Activated CD4-positive, alpha-beta T cell treated with anti-CD3 and anti-CD28 coated beads, Interleukin-2, amount 10 ng/mL, durations not matched to agents 24 days and 14 days (primary cell): ENCODE measurements at regions of chr15 and their contacts with region 1.

Region 1: DNA sequence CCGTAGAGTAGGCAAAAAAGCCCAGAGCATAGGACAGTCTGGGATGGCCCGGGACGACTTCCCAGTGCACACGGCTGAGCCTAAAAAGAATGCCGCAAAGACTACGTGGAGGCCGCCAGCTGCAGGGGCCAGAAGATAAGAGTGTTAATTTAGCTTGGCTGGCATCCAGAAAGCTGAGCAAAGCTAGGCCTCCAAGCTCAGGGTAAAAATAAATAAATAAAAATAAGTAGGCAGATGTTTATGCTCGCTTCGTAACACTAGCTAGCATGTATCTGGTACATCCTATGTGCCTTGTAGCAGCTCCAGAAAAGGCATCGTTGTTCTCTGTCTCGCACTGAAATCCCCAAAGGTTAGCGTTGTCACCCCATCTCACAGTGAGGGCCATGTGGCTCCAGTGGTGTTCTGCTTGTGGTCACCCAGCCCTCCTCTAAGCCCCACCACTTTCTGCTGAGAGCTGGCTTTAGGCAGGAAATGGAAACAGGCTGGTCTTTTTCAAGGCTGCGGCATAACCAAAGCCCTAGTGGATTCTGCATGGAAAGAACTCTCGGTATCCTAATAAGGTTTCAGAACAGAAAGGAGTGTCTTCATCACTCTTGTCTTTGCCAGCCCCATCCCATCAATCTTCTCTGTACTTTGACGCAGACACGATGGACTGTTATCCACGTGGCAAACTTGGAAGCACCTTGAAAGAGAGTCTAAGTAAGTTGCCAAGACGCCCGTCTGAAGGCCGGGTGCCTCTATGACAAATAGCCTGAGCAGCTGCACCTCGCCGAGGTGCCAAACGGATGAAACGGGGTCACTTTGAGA is 58.1 kb upstream of the MEF2A start:
- DNase-seq: peak; percentile 47
- H3K4me3 Mint-ChIP-seq: no peak overlapping the region
- H3K27ac Mint-ChIP-seq: no peak overlapping the region
- H3K4me1 Mint-ChIP-seq: peaks cover 43% of the 10 kb centered on the region
- H3K27me3 Mint-ChIP-seq: no peaks in the 10 kb centered on the region

Region 2: DNA sequence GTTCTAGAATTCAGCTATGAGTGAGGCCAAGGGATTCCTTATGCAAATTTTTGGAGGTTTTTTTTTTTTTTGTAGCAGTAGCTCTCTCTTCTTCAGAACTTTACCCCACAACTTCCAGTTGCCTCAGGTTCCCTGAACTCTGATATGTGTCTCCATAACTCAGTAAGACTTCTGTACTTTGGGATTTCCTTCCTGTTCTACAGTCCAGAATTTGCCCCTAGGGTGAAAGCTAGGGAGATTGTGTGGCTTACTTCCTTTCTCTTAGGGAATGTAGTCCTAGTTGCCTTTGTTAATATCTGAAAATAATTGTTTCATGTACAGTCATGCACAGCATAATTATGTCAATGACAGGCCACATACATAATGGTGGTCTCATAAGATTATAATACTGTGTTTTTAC is 225.6 kb before region 1 on chr15:
- intact Hi-C with region 1: loop called (anchors 10 kb)
- DNase-seq: peak; percentile 27
- H3K4me3 Mint-ChIP-seq: no peak overlapping the region
- H3K27ac Mint-ChIP-seq: peak overlapping the region; percentile 48
- H3K4me1 Mint-ChIP-seq: peaks cover 39% of the 10 kb centered on the region
- H3K27me3 Mint-ChIP-seq: no peaks in the 10 kb centered on the region

Region 3: GRCh38 chr15:99345832-99346462 is 161.8 kb before region 1 on chr15:
- intact Hi-C with region 1: no loop called
- DNase-seq: peak; percentile 19
- H3K4me3 Mint-ChIP-seq: no peak overlapping the region
- H3K27ac Mint-ChIP-seq: no peak overlapping the region
- H3K4me1 Mint-ChIP-seq: peaks cover 6% of the 10 kb centered on the region
- H3K27me3 Mint-ChIP-seq: no peaks in the 10 kb centered on the region

Region 4: GRCh38 chr15:99442252-99442897 is 65.3 kb before region 1 on chr15:
- intact Hi-C with region 1: loop called (anchors 5 kb)
- DNase-seq: no peak
- H3K4me3 Mint-ChIP-seq: peak overlapping the region; percentile 5
- H3K27ac Mint-ChIP-seq: peak overlapping the region; percentile 69
- H3K4me1 Mint-ChIP-seq: peaks cover 32% of the 10 kb centered on the region
- H3K27me3 Mint-ChIP-seq: peaks cover 2% of the 10 kb centered on the region